ENCODE measurements at regions of chr5 and their contacts with region 1.

Region 1: DNA sequence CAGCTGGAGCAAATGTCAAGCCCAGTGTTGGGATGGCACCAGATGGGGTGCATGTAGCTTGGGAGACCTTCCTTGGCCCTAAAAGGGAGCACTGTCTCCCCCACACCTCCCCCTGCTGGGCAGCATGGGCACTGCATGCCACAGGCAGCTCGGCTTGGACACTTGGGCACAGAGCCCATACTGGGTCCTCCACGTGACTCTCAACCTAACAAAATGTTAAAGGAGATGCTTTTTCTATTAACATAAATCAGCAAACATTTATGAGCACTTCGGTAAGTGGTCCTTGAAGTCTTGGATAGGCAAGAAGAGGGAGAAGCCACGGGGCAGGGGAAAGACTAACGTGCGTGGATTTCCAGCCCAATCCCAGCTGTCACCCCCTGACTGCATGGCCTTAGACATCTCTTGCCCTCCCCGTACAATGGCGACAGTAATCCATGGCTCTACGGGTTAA is 23.9 kb upstream of the MAPK9 start:
- DNase-seq: peak; percentile 85
- H3K4me3 ChIP-seq: no peak overlapping the region; a peak in 1 of 4 replicates
- H3K27ac ChIP-seq: no peak overlapping the region
- H3K4me1 ChIP-seq: peaks cover 0 to 2% of the 10 kb centered on the region in 2 experiments; a peak in 1 of 4 replicates
- H3K27me3 ChIP-seq: no peaks in the 10 kb centered on the region
- CTCF ChIP-seq: peak; percentile 90
- EP300 ChIP-seq: no peak
- RAD21 ChIP-seq: peak; percentile 75

Region 2: DNA sequence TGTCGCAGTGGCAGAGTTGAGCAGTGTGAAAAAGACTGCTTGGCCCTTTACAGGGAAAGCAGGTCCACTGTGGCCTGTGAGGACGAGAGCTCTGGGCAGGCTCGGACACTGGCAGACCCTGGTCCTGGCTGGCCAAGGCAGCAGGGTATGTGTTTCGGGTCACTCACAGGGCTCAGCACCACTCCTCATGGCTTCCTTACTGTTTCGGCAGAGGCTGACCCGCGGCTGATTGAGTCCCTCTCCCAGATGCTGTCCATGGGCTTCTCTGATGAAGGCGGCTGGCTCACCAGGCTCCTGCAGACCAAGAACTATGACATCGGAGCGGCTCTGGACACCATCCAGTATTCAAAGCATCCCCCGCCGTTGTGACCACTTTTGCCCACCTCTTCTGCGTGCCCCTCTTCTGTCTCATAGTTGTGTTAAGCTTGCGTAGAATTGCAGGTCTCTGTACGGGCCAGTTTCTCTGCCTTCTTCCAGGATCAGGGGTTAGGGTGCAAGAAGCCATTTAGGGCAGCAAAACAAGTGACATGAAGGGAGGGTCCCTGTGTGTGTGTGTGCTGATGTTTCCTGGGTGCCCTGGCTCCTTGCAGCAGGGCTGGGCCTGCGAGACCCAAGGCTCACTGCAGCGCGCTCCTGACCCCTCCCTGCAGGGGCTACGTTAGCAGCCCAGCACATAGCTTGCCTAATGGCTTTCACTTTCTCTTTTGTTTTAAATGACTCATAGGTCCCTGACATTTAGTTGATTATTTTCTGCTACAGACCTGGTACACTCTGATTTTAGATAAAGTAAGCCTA is 479.4 kb before region 1 on chr5:
- CTCF ChIA-PET with region 1: no interaction called
- POLR2A ChIA-PET with region 1: no interaction called
- DNase-seq: no peak
- H3K4me3 ChIP-seq: no peak overlapping the region
- H3K27ac ChIP-seq: peak overlapping the region in 1 of 2 experiments; percentile 39; a peak in 2 of 4 replicates
- H3K4me1 ChIP-seq: no peaks in the 10 kb centered on the region; a peak in 1 of 4 replicates
- H3K27me3 ChIP-seq: no peaks in the 10 kb centered on the region
- CTCF ChIP-seq: no peak
- EP300 ChIP-seq: no peak
- RAD21 ChIP-seq: no peak

Region 3: DNA sequence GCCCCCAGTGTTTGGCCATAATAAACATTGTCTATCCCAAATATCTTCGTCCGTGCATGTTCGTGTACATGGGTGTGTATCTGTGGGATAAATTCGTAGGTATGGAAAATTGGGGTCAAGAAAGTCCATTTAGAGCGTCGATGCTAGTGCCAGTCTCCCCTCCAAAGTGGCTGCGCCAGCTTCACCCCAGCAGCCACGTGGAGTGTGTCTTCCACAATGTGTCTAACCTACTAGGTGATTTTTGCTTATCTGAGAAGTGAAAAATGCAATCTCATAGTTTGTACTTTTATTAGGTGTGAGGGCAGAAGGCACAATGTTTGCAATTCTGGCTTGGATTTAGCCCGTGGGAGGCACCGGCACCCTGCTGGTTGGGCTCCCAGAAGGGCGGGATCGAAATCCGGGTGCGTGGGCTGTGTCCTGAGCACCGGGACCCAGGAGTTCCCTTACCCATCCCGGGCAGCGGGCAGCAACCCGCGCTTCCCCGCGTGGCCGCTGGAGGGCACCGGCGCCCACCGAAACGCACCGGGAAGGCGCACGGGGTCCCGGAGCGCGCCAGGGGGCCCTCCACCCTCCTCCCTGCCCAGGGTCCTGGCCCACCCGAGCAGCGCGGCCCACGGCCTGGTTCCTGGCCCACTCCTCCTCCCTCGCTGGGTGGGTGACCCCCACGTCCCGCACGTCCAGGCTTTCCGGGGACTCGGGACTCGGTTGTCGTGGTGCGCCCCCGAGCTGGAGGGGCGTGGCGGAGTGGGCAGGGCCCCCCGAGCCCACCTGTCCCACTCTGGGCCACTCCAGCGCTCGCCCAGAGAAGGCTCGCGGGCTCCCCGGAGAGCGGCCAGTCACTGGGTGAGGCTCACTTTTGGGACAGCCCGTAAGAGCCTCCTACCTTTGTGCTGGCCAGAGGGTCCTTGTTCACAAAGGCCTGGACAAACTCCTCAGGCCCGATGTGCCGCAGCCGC is 188.8 kb before region 1 on chr5:
- CTCF ChIA-PET with region 1: interaction called, 16 read pairs
- POLR2A ChIA-PET with region 1: no interaction called
- DNase-seq: peak; percentile 92
- H3K4me3 ChIP-seq: peak overlapping the region; percentile 27 to 41; a peak in 2 of 4 replicates
- H3K27ac ChIP-seq: no peak overlapping the region
- H3K4me1 ChIP-seq: peaks cover 0 to 6% of the 10 kb centered on the region in 2 experiments; a peak in 1 of 4 replicates
- H3K27me3 ChIP-seq: peaks cover 9% of the 10 kb centered on the region; the same call in 1 of the 2 replicates
- CTCF ChIP-seq: peak; percentile 74
- EP300 ChIP-seq: no peak
- RAD21 ChIP-seq: peak; percentile 80

Region 4: GRCh38 chr5:180161420-180162303 is 154.1 kb before region 1 on chr5:
- CTCF ChIA-PET with region 1: interaction called, 11 read pairs
- POLR2A ChIA-PET with region 1: interaction called, 3 read pairs
- DNase-seq: peak; percentile 80
- H3K4me3 ChIP-seq: peak overlapping the region in 1 of 2 experiments; percentile 19; a peak in 1 of 4 replicates
- H3K27ac ChIP-seq: no peak overlapping the region
- H3K4me1 ChIP-seq: peaks cover 0 to 11% of the 10 kb centered on the region in 2 experiments; a peak in 1 of 4 replicates
- H3K27me3 ChIP-seq: no peaks in the 10 kb centered on the region
- CTCF ChIP-seq: no peak
- EP300 ChIP-seq: no peak
- RAD21 ChIP-seq: peak; percentile 66

Region 5: DNA sequence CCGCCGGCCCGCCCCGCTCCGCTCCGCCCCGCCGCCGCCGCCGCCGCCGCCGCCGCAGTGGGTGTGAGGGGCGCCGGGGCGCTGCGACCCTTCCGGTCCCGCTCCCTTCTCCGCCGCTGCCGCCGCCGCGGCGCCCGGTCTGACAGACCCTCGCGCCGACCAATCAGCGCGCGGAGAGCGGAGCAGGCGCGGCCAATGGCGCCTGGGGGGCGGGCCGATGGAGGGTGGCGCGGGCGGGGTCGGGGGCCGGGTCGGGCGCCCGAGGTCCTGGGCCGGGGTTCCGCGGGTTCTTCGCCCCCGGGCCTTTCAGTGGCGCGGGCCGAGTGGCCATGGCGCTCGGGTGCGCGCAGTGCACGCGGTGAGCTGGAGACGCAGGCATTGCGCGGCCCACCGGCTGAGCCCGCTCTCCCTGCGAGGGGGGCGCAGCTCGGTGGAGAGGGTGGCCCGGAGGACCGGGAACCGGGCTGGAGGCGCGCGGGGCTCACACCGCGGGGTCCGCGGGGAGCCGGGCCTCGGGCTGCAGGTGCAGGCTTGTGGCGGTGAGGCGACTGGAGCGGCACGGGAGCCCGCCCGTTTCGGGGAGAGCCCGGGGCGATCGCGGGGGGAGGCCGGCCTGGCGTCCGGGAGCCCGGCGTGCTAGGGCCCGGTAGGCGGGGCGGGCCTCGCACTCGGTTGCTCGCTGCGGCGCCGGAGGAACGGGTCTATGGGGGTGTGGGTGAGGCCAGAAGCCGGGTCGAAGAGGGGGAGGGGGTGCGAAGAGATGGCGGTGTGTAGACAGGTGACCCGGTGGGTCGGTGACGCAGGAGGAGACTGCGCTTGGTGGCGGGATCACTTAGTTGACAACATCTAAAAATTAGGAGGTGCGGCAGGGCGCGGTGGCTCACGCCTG is 23.6 kb before region 1 on chr5 and contains the start of gene MAPK9:
- CTCF ChIA-PET with region 1: interaction called, 131 read pairs
- POLR2A ChIA-PET with region 1: interaction called, 6 read pairs
- DNase-seq: peak; percentile 97
- H3K4me3 ChIP-seq: peak within 1 kb of the TSS; percentile 85 to 92
- H3K27ac ChIP-seq: peak within 1 kb of the TSS; percentile 47 to 81; a peak in 3 of 4 replicates
- H3K4me1 ChIP-seq: peaks cover 0 to 39% of the 10 kb centered on the region in 2 experiments; a peak in 2 of 4 replicates
- H3K27me3 ChIP-seq: no peaks in the 10 kb centered on the region
- CTCF ChIP-seq: peak; percentile 16; the same call in 1 of the 2 replicates
- EP300 ChIP-seq: no peak
- RAD21 ChIP-seq: no peak
- polyA plus RNA-seq, gene MAPK9: 23.9 and 26.2 TPM in 2 replicates

Region 6: DNA sequence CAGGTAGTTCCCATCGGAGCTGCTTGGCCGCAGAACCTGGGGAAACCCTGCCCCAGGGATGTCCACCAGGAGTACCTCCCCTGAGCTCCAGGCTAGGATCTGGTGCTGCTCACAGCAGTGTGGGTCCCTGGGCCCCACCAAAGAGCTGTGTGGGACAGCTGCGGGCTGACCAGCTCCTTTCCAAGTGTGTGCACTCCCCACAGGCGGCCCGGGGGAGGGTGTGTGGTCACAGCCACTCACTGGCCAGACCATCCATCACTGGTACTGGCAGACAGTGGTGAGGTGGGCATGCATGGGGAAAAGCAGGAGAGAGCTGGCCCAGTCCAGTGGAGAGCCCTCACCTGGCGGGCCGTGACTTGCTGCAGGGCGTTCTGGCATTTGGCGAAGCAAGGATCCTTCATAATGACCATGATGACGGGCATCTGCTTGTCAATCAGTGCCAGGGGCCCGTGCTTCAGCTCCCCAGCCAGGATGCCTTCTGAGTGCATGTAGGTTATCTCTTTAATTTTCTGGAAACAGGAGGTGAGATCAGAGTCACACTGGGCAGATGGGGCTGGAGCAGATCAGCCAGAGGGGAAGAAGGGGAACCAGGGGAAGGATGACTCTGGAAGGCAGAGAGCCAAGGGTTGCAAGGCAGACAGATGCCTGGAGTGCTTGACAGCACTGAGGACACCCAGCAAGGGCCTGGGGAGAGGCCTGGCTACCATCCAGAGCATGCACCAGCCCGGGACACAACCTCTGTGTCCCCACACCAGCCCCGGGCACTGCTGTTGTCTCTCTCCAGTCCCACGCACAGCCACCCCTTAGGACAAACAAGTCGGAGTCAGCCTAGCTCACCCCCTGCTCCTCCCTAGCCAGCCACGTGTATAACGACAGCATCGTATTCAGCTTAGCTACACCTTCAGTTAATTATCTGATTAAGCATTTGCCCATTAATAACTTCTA is 11.1 kb before region 1 on chr5:
- CTCF ChIA-PET with region 1: interaction called, 68 read pairs
- POLR2A ChIA-PET with region 1: interaction called, 6 read pairs
- DNase-seq: peak; percentile 74
- H3K4me3 ChIP-seq: no peak overlapping the region
- H3K27ac ChIP-seq: peak overlapping the region in 1 of 2 experiments; percentile 4; a peak in 1 of 4 replicates
- H3K4me1 ChIP-seq: peaks cover 0 to 19% of the 10 kb centered on the region in 2 experiments; a peak in 1 of 4 replicates
- H3K27me3 ChIP-seq: no peaks in the 10 kb centered on the region
- CTCF ChIP-seq: no peak
- EP300 ChIP-seq: peak in 1 of 2 experiments; percentile 43; a peak in 1 of 4 replicates
- RAD21 ChIP-seq: no peak

Region 7: DNA sequence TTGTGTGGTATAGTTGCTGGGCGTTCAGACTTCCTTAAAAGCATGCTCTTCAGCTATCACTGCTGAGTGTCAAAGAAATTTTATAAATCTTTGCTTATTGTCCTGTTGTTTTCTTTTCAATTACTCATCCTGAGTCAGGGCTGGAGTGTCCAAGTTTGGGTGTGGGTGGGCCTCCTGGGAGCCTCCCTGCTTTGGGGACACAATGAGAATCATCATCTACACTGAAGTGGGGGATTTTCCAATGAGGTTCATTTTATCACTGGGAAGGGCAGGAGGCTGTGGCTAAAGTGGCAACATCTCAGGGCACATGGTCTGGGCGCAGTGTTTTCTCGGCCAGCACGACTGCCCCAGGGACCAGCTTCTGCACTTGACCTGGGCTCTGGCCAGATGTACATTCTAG is 17.9 kb after region 1 on chr5:
- CTCF ChIA-PET with region 1: interaction called, 86 read pairs
- POLR2A ChIA-PET with region 1: no interaction called
- DNase-seq: no peak
- H3K4me3 ChIP-seq: no peak overlapping the region
- H3K27ac ChIP-seq: peak overlapping the region in 1 of 2 experiments; percentile 57; a peak in 1 of 4 replicates
- H3K4me1 ChIP-seq: peaks cover 6 to 12% of the 10 kb centered on the region in 2 experiments; a peak in 2 of 4 replicates
- H3K27me3 ChIP-seq: no peaks in the 10 kb centered on the region
- CTCF ChIP-seq: no peak
- EP300 ChIP-seq: no peak
- RAD21 ChIP-seq: no peak